Gastrocnemius medialis (tissue), 4 donors: ENCODE measurements at regions of chr6 and their contacts with region 1.

Region 1: GRCh38 chr6:3157131-3157927 is at the start of gene TUBB2A:
- DNase-seq: peak; percentile 57 to 69
- ATAC-seq: peak; percentile 81 to 85
- H3K4me3 ChIP-seq: peak within 1 kb of the TSS; percentile 74 to 96 (median 87)
- H3K27ac ChIP-seq: peak within 1 kb of the TSS; percentile 87 to 93 (median 90)
- H3K4me1 ChIP-seq: peaks cover 0 to 5% of the 10 kb centered on the region in 2 donors
- H3K27me3 ChIP-seq: no peaks in the 10 kb centered on the region
- CTCF ChIP-seq: peak in 4 of 5 experiments; percentile 37 to 70 (median 56)
- POLR2A ChIP-seq: peak; percentile 91 to 97
- total RNA-seq, gene TUBB2A: 18.9 to 53.1 (median 27.0) TPM

Region 2: GRCh38 chr6:3052481-3053230 is 104.7 kb before region 1 on chr6:
- in situ Hi-C with region 1: no loop called
- intact Hi-C with region 1: no loop called
- DNase-seq: no peak
- ATAC-seq: no peak
- H3K4me3 ChIP-seq: no peak overlapping the region
- H3K27ac ChIP-seq: no peak overlapping the region
- H3K4me1 ChIP-seq: peaks cover 4 to 14% of the 10 kb centered on the region in 2 donors
- H3K27me3 ChIP-seq: no peaks in the 10 kb centered on the region
- CTCF ChIP-seq: no peak
- POLR2A ChIP-seq: no peak

Region 3: DNA sequence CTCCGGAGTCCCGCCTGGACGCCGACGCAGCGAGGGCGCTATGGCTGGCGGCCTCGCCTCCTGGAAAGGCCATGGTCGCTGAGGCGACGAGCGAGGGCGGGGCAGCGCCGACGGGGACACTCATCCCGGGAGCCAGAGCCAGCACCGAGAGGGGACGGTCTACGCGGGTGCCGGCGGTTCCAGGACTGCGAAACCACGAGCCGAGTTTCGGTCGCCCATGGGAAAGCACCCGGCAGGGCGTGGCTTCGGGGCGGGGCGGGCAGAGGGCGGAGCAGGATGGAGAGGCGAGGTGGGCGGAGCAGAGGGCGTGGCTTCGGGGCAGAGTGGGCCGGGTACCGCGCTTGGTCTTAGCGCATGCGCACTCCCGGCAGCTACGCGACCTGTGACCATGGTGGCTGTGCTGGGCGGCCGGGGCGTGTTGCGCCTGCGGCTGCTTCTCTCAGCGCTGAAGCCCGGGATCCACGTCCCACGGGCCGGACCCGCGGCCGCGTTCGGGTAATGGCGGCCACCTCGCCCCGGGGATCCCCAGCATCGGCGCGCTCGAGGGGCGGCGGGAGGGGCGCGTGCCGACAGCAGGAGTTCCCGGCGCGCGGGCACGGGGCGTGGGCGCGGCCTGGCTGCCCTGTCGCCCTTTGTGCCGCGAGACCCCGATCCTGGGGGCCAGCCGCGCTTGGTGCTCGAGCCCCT is 38.8 kb before region 1 on chr6 and contains the start of gene BPHL:
- in situ Hi-C with region 1: no loop called
- intact Hi-C with region 1: loop called (anchors 2 kb)
- DNase-seq: peak; percentile 95 to 96
- ATAC-seq: peak; percentile 96
- H3K4me3 ChIP-seq: peak within 1 kb of the TSS; percentile 78 to 90 (median 82)
- H3K27ac ChIP-seq: peak within 1 kb of the TSS; percentile 90 to 97 (median 96)
- H3K4me1 ChIP-seq: peaks cover 13 to 14% of the 10 kb centered on the region in 2 donors
- H3K27me3 ChIP-seq: no peaks in the 10 kb centered on the region
- CTCF ChIP-seq: no peak
- POLR2A ChIP-seq: peak; percentile 76
- total RNA-seq, gene BPHL: 4.7 to 8.7 (median 5.8) TPM

Region 4: DNA sequence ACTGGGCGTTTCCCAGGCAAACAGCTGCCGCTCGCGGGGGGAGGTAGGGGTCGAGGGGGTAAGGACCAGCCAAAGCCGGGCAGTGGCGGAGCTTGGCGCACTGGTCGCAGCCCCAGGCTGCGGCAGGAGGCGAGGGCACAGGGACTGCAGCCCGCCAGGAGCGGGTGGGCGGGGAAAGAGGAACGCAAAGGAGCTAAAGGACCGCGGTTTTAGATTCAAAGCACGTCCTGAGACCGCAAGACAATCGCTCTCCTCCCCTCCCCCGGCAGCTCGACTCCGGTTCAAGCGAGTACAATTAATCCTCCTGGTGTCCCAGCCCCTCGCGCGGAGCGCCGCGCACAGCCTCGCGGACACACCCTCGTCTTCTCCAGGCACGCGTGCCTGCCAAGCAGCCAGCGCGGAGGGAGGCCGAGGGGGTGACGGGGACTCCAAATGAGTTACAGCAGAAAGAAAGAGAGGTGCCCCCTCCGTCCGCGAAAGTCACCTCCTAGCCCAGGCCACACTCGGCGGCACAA is 69.6 kb after region 1 on chr6:
- in situ Hi-C with region 1: no loop called
- intact Hi-C with region 1: loop called (anchors 5 kb)
- DNase-seq: no peak
- ATAC-seq: no peak
- H3K4me3 ChIP-seq: peak overlapping the region; percentile 43 to 57 (median 50)
- H3K27ac ChIP-seq: no peak overlapping the region
- H3K4me1 ChIP-seq: peaks cover 27 to 38% of the 10 kb centered on the region in 2 donors
- H3K27me3 ChIP-seq: peaks cover 57 to 61% (median 60%) of the 10 kb centered on the region in 3 donors
- CTCF ChIP-seq: no peak
- POLR2A ChIP-seq: no peak

Region 5: GRCh38 chr6:3825851-3826581 is 668.7 kb after region 1 on chr6:
- in situ Hi-C with region 1: no loop called
- intact Hi-C with region 1: no loop called
- DNase-seq: peak; percentile 74 to 84
- ATAC-seq: peak; percentile 84 to 92
- H3K4me3 ChIP-seq: peak overlapping the region; percentile 33 to 42 (median 39)
- H3K27ac ChIP-seq: peak overlapping the region; percentile 86 to 92 (median 90)
- H3K4me1 ChIP-seq: peaks cover 23 to 25% of the 10 kb centered on the region in 2 donors
- H3K27me3 ChIP-seq: no peaks in the 10 kb centered on the region
- CTCF ChIP-seq: no peak
- POLR2A ChIP-seq: peak in 1 of 2 donors; percentile 56